ENCODE measurements at regions of chr3 and their contacts with region 1.

Region 1: GRCh38 chr3:138389841-138390586 is 41.6 kb downstream of the MRAS start:
- DNase-seq: peak in 1 of 2 donors; percentile 54
- ATAC-seq: peak; percentile 58 to 96 (median 87)
- H3K4me3 ChIP-seq: no peak overlapping the region
- H3K27ac ChIP-seq: peak overlapping the region; percentile 47 to 94 (median 78)
- H3K4me1 ChIP-seq: peaks cover 0 to 78% (median 24%) of the 10 kb centered on the region in 9 donors
- H3K27me3 ChIP-seq: no peaks in the 10 kb centered on the region
- CTCF ChIP-seq: no peak

Region 2: DNA sequence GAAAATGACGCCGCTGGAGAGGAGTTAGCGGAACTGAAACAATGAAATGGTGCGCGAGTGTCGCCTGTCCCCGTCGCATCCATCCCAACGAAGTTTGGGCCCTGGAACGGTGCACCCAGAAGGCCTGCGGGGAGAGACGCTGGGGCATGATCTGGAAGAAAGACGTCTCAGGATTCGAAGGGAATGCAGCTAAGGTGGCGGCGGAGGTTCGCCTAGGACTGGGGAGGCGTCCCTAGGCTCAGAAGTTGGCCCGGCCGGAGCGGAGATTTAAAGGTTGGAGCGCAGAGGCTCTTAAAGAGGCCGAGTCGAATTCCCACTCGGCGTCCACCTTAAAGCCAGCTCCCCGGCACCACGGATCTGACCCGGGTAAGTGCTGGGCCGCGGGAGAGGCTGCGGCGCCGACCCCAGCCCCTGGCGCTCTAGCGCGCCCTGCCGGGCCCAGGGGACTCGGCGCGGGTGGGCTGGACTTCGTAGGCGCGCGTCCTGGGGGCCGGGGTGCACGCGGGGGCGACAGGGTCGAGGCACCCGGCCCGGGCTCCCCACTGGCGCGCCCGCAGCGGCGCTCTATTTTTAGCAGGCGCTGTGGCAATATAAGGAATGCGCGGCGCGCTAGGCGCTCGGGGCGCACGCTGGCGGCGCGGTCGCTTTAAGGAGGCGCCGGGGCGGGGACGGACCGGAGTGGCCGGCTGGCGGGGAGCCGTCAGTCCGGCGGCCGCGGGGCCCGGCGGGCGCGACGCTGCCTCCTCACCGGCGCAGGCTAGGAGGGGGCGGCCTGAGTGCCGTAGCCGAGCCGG is 41.9 kb before region 1 on chr3 and contains the start of gene MRAS:
- intact Hi-C with region 1: loop called in 8 of 10 experiments (anchors 5 to 10 kb)
- DNase-seq: peak; percentile 75 to 83
- ATAC-seq: peak; percentile 50 to 87 (median 74)
- H3K4me3 ChIP-seq: peak within 1 kb of the TSS; percentile 38 to 94 (median 86)
- H3K27ac ChIP-seq: peak within 1 kb of the TSS; percentile 89 to 99 (median 94)
- H3K4me1 ChIP-seq: peaks cover 0 to 47% (median 33%) of the 10 kb centered on the region in 9 donors
- H3K27me3 ChIP-seq: peaks cover 0 to 14% (median 0%) of the 10 kb centered on the region in 7 donors
- CTCF ChIP-seq: peak in 7 of 9 donors; percentile 34 to 70 (median 42)
- total RNA-seq, gene MRAS: 221 to 381 (median 266) TPM

Region 3: GRCh38 chr3:138426226-138426625 is 36.2 kb after region 1 on chr3:
- intact Hi-C with region 1: no loop called
- DNase-seq: no peak
- ATAC-seq: peak in 2 of 8 donors; percentile 33 to 61
- H3K4me3 ChIP-seq: no peak overlapping the region
- H3K27ac ChIP-seq: no peak overlapping the region
- H3K4me1 ChIP-seq: no peaks in the 10 kb centered on the region
- H3K27me3 ChIP-seq: peaks cover 0 to 7% (median 0%) of the 10 kb centered on the region in 7 donors
- CTCF ChIP-seq: peak in 8 of 9 donors; percentile 23 to 63 (median 53)

Measured in heart right ventricle (tissue), 16 donors.